Activated CD4-positive, alpha-beta T cell treated with anti-CD3 and anti-CD28 coated beads for 36 hours (primary cell): ENCODE measurements at regions of chr9 and their contacts with region 1.

Region 1: DNA sequence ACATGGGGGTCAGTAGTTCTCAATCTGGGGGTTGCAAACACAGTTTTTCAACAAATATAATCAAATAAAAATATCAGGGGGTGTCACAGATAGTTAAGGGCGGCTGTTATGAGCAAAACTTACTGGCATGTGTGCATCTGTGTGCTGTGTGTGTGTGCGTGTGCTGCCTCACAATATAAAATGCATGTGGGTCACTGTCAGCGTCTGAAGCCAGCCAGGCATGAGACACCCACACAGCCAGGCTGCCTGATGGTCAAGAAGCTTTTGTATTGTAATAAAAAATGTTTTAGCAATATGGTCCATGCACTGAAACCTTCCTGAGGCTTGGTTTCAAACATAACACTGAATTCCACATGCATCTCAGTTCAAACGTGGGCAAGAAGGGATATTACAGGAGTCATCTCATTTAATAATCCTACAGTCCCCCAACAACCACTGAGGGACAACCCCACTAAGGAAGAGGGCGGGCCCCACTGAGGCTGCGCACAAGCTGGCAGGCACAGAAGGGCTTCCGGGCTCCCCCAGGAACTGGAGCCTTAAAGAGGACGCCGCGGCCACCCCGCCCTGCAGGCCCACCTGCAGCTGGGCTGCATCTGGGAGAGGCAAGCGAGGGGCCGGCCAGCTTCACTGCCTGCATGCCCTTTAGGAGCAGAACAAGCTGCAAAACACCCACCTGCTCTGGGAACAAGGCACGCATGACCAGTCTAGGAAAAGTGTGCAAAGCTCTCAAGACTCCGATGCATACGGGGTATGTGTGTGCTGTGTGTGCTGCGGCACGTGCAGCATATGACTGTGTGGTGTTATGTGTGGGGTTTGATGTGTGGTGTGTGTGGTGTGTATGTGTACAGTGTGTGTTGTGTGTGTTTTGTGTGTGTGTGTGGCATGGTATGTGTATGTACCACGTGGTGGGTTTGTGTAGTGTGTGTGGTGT is 14.1 kb downstream of the SEMA4D start:
- DNase-seq: peak; percentile 79
- ATAC-seq: peak; percentile 57
- H3K4me3 Mint-ChIP-seq: peak overlapping the region; percentile 79
- H3K27ac Mint-ChIP-seq: peak overlapping the region; percentile 93
- H3K4me1 Mint-ChIP-seq: peaks cover 91% of the 10 kb centered on the region
- H3K27me3 Mint-ChIP-seq: no peaks in the 10 kb centered on the region

Region 2: DNA sequence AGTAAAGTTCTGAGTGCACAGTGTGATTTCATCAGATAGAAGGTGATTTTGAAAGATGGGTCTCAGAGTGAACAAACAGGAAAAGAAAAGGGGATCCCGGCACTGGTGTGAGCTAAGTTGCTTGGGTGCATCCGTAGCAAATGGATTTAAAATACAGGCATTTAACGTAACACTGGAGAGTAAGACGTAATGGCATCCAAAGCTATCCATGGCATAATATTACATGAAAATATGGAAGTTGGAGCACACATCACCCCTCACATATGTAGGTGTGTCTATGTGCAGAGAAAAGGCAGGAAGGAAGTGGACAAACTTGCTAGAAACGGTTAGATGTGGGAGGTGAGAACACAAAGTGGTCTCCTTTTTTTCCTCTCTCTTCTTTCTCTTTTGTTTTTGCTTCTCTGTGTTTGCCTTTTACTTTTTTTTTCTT is 52.3 kb after region 1 on chr9:
- CTCF ChIA-PET with region 1: interaction called, 4 read pairs
- POLR2A ChIA-PET with region 1: no interaction called
- intact Hi-C with region 1: loop called in 1 of 2 experiments (anchors 2 kb)
- DNase-seq: no peak
- ATAC-seq: peak; percentile 68
- H3K4me3 Mint-ChIP-seq: peak overlapping the region; percentile 57
- H3K27ac Mint-ChIP-seq: peak overlapping the region; percentile 97
- H3K4me1 Mint-ChIP-seq: peaks cover 88% of the 10 kb centered on the region
- H3K27me3 Mint-ChIP-seq: no peaks in the 10 kb centered on the region

Region 3: GRCh38 chr9:89770531-89771174 is 286.8 kb after region 1 on chr9:
- CTCF ChIA-PET with region 1: no interaction called
- POLR2A ChIA-PET with region 1: no interaction called
- intact Hi-C with region 1: no loop called
- DNase-seq: no peak
- ATAC-seq: no peak
- H3K4me3 Mint-ChIP-seq: no peak overlapping the region
- H3K27ac Mint-ChIP-seq: no peak overlapping the region
- H3K4me1 Mint-ChIP-seq: no peaks in the 10 kb centered on the region
- H3K27me3 Mint-ChIP-seq: no peaks in the 10 kb centered on the region